ENCODE measurements at regions of chr4 and their contacts with region 1.

Region 1: DNA sequence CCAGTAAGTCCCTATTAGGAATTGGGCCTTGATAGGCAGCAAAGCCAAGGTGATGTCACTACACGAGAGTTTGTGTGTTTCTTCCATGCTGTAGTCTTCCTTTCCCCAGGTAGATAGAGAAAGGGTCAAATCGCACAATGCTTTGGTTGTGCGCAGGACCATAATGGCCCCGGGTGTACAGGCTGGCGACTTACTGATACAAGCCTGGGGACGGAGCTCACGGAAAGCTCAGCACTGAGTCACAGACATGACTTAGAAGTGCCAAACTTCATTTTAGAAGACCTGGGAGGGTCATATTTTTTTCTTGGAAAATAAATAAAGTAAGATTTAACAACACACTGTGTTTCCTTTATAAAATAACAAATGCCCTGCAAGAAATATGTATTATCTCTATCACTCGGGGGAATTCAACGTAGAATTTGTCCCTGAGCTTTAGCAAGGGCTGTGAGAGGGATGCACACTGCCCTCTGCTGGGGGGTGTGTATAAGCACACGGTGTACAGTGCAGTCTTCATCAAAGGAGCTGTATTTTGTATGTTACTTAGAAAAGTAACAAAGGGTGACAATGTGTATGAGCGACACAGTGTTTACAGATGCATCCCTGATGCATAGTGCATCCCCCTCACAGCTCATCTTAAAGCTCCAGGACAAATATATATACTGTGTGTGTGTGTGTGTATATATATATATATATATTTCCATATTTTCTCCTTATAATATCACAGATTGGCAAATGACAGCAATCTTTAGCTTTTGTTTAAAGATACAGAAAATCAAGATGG is 254.5 kb upstream of the VEGFC start:
- DNase-seq: peak in 9 of 10 donors; percentile 31 to 94 (median 69)

Region 2: GRCh38 chr4:176789955-176790354 is 257.3 kb before region 1 on chr4:
- intact Hi-C with region 1: loop called (anchors 5 kb)
- DNase-seq: no peak

Region 3: DNA sequence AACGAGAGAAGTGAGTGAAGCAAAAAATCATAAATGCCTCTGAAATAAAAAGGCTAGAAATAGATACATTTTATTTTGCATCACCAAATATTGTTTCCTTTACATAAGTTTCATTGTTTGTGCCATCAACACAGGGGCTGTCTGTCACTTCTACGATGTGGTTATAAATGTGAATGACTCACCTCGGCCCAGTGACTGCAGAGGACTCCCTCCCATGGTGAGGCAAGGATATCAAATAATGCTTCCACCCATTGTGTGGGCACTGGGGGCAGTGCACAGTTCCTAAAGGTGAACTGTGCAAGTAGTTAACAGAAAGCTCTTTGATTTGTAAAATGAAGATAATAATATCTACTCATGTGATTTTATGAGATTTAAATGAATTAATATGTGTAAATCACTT is 32.1 kb after region 1 on chr4:
- intact Hi-C with region 1: no loop called
- DNase-seq: no peak

Region 4: DNA sequence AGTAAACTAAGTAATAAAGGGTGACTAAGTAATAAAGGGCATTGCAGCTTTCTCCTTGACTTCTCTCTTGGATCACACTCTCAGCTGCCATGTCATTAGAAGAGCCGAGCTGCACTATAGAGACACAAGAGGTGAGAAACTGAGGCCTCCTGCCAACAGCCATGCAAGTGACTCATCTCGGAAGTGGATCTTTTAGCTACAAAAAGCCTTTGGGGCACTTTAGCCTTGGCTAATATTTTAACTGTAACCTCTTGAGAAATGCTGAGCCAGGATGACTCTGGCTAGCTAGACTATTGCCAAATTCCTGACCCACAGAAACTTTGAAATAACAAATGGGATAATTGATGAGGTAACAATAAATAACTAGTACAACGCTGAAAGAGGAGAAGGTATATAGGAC is 260.9 kb after region 1 on chr4:
- intact Hi-C with region 1: no loop called
- DNase-seq: no peak

Measured in posterior cingulate gyrus (tissue), 11 donors.